ENCODE measurements at regions of chr19 and their contacts with region 1.

Region 1: GRCh38 chr19:53102756-53103197 is 445 bp downstream of the ZNF160 start:
- DNase-seq: peak; percentile 23
- H3K4me3 ChIP-seq: peak overlapping the region; percentile 96
- H3K27ac ChIP-seq: peak overlapping the region; percentile 91
- H3K4me1 ChIP-seq: no peaks in the 10 kb centered on the region
- H3K27me3 ChIP-seq: no peaks in the 10 kb centered on the region
- CTCF ChIP-seq: no peak

Region 2: DNA sequence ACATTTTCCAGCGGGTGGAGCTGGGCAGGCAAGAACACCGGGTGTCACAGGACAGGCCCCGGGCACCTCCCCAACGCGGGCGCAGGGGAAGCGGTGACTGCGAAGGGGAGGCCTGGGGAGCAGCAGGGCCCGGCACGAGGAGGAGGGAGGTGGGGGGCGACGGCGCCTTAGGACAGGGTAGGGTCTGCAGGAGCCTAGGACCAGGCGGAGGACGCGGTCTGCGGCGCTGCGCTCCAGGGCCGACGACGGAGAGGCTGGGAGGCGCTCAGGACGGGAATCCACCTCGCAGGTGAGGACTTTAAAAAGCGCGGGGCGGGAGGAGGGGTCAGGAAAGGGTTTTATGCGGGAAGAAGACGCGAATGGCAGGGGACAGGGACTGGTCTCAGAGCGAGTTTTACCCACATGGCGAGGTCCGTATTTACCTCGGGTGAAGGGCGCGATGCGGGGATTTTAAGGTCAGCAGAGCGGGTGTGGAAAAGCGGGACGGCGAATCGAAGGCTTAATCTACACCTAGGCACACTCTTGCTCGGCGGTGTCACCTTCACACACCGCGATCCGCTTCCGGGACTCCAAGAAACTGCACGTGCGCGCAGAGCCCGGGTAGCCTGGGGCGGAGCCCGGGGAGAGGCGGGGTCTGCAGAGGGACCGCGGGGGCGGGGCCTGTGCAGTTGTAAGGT is 44.7 kb before region 1 on chr19:
- CTCF ChIA-PET with region 1: no interaction called
- POLR2A ChIA-PET with region 1: interaction called, 10 read pairs
- intact Hi-C with region 1: no loop called
- DNase-seq: no peak
- H3K4me3 ChIP-seq: no peak overlapping the region
- H3K27ac ChIP-seq: no peak overlapping the region
- H3K4me1 ChIP-seq: no peaks in the 10 kb centered on the region
- H3K27me3 ChIP-seq: no peaks in the 10 kb centered on the region
- CTCF ChIP-seq: no peak

Measured in A673 (cell line).